Endothelial cell of umbilical vein (primary cell): ENCODE measurements at regions of chr2 and their contacts with region 1.

Region 1: GRCh38 chr2:165401285-165401852 is 68.1 kb upstream of the CSRNP3 start:
- DNase-seq: peak; percentile 77
- H3K4me3 ChIP-seq: no peak overlapping the region
- H3K27ac ChIP-seq: no peak overlapping the region
- H3K4me1 ChIP-seq: no peaks in the 10 kb centered on the region
- H3K27me3 ChIP-seq: peaks cover 22 to 30% of the 10 kb centered on the region in 2 experiments
- CTCF ChIP-seq: peak; percentile 43 to 46
- POLR2A ChIP-seq: no peak

Region 2: GRCh38 chr2:165428926-165429325 is 27.6 kb after region 1 on chr2:
- CTCF ChIA-PET with region 1: no interaction called
- POLR2A ChIA-PET with region 1: no interaction called
- dilution Hi-C with region 1: no loop called
- intact Hi-C with region 1: no loop called
- DNase-seq: no peak
- H3K4me3 ChIP-seq: no peak overlapping the region
- H3K27ac ChIP-seq: no peak overlapping the region
- H3K4me1 ChIP-seq: no peaks in the 10 kb centered on the region
- H3K27me3 ChIP-seq: no peaks in the 10 kb centered on the region
- CTCF ChIP-seq: no peak
- POLR2A ChIP-seq: no peak

Region 3: GRCh38 chr2:165443511-165443910 is 42.1 kb after region 1 on chr2:
- CTCF ChIA-PET with region 1: no interaction called
- POLR2A ChIA-PET with region 1: no interaction called
- dilution Hi-C with region 1: no loop called
- intact Hi-C with region 1: no loop called
- DNase-seq: no peak
- H3K4me3 ChIP-seq: no peak overlapping the region
- H3K27ac ChIP-seq: no peak overlapping the region
- H3K4me1 ChIP-seq: no peaks in the 10 kb centered on the region
- H3K27me3 ChIP-seq: no peaks in the 10 kb centered on the region
- CTCF ChIP-seq: no peak
- POLR2A ChIP-seq: no peak

Region 4: GRCh38 chr2:165544897-165545296 is 143.5 kb after region 1 on chr2:
- CTCF ChIA-PET with region 1: no interaction called
- POLR2A ChIA-PET with region 1: no interaction called
- dilution Hi-C with region 1: no loop called
- intact Hi-C with region 1: no loop called
- DNase-seq: no peak
- H3K4me3 ChIP-seq: no peak overlapping the region
- H3K27ac ChIP-seq: no peak overlapping the region
- H3K4me1 ChIP-seq: no peaks in the 10 kb centered on the region
- H3K27me3 ChIP-seq: no peaks in the 10 kb centered on the region
- CTCF ChIP-seq: no peak
- POLR2A ChIP-seq: no peak

Region 5: DNA sequence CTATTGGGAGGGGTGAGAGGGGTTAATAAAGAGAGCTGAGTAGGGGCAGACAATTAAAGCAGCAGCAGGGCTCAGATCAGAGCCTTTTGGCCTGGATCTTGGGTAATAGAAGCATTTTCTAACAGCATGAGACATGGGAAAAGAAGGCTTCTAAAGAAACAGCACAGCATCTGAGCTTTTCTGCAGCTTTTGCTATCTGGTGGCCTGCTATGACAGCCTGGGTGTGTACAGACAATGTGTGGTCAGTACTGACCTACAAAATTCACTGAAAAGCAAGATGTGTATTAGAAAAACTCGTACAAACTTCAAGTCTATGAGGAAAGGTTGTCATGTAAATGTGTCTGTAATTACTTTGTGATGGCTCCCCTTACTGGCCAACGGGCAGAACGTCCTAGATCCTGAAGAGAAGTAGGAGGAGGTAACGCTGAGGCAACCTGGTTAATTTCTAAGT is 297.1 kb after region 1 on chr2:
- CTCF ChIA-PET with region 1: interaction called, 9 read pairs
- POLR2A ChIA-PET with region 1: no interaction called
- dilution Hi-C with region 1: no loop called
- intact Hi-C with region 1: loop called (anchors 1 kb)
- DNase-seq: peak; percentile 56
- H3K4me3 ChIP-seq: no peak overlapping the region
- H3K27ac ChIP-seq: no peak overlapping the region
- H3K4me1 ChIP-seq: no peaks in the 10 kb centered on the region
- H3K27me3 ChIP-seq: peaks cover 2 to 6% of the 10 kb centered on the region in 2 experiments
- CTCF ChIP-seq: peak; percentile 30 to 52
- POLR2A ChIP-seq: no peak

Region 6: GRCh38 chr2:165778653-165779451 is 377.5 kb after region 1 on chr2:
- CTCF ChIA-PET with region 1: interaction called, 14 read pairs
- POLR2A ChIA-PET with region 1: no interaction called
- dilution Hi-C with region 1: no loop called
- intact Hi-C with region 1: loop called (anchors 1 kb)
- DNase-seq: peak; percentile 7
- H3K4me3 ChIP-seq: no peak overlapping the region
- H3K27ac ChIP-seq: no peak overlapping the region
- H3K4me1 ChIP-seq: no peaks in the 10 kb centered on the region
- H3K27me3 ChIP-seq: no peaks in the 10 kb centered on the region
- CTCF ChIP-seq: peak; percentile 20 to 23
- POLR2A ChIP-seq: no peak